ENCODE measurements at regions of chr3 and their contacts with region 1.

Region 1: DNA sequence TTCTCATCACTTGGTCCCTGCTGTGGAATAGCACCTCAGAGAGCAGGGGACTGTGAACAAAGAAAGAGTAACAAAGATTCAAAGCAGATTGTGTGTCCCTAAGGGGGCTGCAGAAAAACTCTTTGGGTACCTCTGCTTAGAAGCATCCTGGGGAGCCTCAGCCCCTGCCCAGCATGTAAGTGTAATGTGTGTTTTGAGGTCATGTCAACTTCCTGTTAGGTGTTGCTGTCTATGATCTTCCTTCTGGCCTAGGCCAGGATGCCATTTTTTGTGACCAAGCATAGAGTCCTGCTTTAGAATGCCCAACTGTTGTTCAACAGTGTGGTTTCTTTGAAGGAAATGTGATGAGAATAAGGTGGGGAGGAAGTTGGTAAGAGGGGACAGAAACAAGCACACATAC is 77.1 kb upstream of the BCL6 start:
- DNase-seq: no peak
- ATAC-seq: no peak
- H3K4me3 ChIP-seq: no peak overlapping the region
- H3K27ac ChIP-seq: no peak overlapping the region
- H3K4me1 ChIP-seq: no peaks in the 10 kb centered on the region
- H3K27me3 ChIP-seq: no peaks in the 10 kb centered on the region
- CTCF ChIP-seq: no peak

Region 2: GRCh38 chr3:187763850-187764648 is 58.4 kb before region 1 on chr3:
- intact Hi-C with region 1: loop called in 1 of 2 experiments (anchors 5 kb)
- DNase-seq: no peak
- ATAC-seq: peak in 3 of 4 donors; percentile 23 to 50 (median 27)
- H3K4me3 ChIP-seq: no peak overlapping the region
- H3K27ac ChIP-seq: no peak overlapping the region
- H3K4me1 ChIP-seq: no peaks in the 10 kb centered on the region
- H3K27me3 ChIP-seq: no peaks in the 10 kb centered on the region
- CTCF ChIP-seq: no peak

Region 3: DNA sequence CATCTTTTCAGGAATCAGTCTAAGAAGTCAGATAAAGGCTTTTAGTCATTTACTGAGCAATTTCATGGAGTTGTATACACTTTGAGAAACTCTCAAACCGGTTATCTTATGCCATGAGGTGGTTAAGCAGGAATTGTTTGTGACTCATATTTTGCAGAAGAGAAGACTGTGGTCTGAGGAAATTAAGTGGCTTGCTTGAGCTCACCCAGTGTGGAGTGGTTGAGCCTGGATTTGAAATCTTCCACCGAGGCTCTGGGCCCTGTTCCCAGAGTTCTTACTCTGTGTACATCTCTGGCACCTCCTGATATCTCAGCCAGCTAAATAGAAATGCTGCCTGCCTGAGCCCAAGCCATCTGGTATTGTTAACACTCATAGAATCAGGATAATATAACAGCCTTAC is 39.3 kb before region 1 on chr3:
- intact Hi-C with region 1: no loop called
- DNase-seq: no peak
- ATAC-seq: peak; percentile 62 to 90 (median 84)
- H3K4me3 ChIP-seq: no peak overlapping the region
- H3K27ac ChIP-seq: no peak overlapping the region
- H3K4me1 ChIP-seq: peaks cover 5% of the 10 kb centered on the region
- H3K27me3 ChIP-seq: no peaks in the 10 kb centered on the region
- CTCF ChIP-seq: no peak

Measured in psoas muscle (tissue), 8 donors.